ENCODE measurements at regions of chr5 and their contacts with region 1.

Region 1: GRCh38 chr5:159106569-159107282 is 7.0 kb upstream of the EBF1 start:
- DNase-seq: peak; percentile 71
- H3K4me3 Mint-ChIP-seq: peak overlapping the region; percentile 65
- H3K27ac Mint-ChIP-seq: no peak overlapping the region
- H3K4me1 Mint-ChIP-seq: peaks cover 20% of the 10 kb centered on the region
- H3K27me3 Mint-ChIP-seq: peaks cover 67% of the 10 kb centered on the region

Region 2: GRCh38 chr5:158695595-158696330 is 411.0 kb before region 1 on chr5:
- CTCF ChIA-PET with region 1: interaction called, 64 read pairs
- POLR2A ChIA-PET with region 1: no interaction called
- DNase-seq: peak; percentile 63
- H3K4me3 Mint-ChIP-seq: no peak overlapping the region
- H3K27ac Mint-ChIP-seq: no peak overlapping the region
- H3K4me1 Mint-ChIP-seq: peaks cover 3% of the 10 kb centered on the region
- H3K27me3 Mint-ChIP-seq: no peaks in the 10 kb centered on the region

Region 3: GRCh38 chr5:159083548-159084452 is 22.9 kb before region 1 on chr5:
- CTCF ChIA-PET with region 1: no interaction called
- POLR2A ChIA-PET with region 1: no interaction called
- DNase-seq: no peak
- H3K4me3 Mint-ChIP-seq: no peak overlapping the region
- H3K27ac Mint-ChIP-seq: no peak overlapping the region
- H3K4me1 Mint-ChIP-seq: no peaks in the 10 kb centered on the region
- H3K27me3 Mint-ChIP-seq: peaks cover 10% of the 10 kb centered on the region